MCF 10A (cell line): ENCODE measurements at regions of chr11 and their contacts with region 1.

Region 1: DNA sequence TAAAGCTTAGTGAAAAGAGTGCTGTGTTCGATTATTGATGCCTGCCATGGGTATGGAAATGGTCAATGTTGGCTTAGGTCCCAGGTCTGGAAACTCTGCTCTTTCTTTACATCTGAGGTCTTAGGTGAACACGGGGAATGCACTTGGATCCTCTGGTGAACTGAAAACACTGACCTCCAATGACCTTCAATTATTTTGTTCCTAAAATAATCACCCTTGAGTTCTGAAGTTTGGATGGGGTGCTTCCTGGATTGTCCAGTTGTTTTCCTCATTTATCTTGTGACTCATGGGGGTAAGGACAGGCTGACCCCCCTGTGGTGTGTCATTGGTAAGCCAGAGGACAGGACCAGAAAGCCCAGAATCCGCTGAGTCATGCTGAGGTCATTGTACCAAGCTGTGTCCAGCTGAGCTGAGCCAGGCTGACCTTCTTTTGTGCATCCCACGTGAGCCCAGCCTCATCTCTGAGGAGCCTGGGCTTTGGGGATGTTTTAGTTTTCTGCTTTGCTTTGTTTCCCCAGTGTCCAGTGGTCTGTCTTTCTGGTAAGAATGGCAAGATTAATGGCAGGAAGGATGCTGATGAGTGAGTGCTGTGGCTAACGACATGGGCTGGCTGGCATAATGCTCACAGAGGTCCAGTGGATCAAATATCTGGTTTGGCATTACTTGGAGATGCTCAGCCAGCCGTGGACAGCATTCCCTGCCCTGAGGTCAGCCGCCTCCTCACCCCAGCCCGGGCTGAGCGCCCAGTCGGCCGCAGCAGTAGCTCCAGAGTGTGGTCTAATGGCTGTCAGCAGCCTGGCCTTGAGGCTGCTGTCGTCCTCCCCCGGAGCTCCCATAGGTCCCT is 35.6 kb downstream of the AMPD3 start:
- DNase-seq: peak; percentile 87
- H3K4me3 Mint-ChIP-seq: no peak overlapping the region
- H3K27ac Mint-ChIP-seq: peak overlapping the region; percentile 96
- H3K4me1 Mint-ChIP-seq: peaks cover 23% of the 10 kb centered on the region
- H3K27me3 Mint-ChIP-seq: no peaks in the 10 kb centered on the region
- CTCF ChIP-seq: no peak

Region 2: DNA sequence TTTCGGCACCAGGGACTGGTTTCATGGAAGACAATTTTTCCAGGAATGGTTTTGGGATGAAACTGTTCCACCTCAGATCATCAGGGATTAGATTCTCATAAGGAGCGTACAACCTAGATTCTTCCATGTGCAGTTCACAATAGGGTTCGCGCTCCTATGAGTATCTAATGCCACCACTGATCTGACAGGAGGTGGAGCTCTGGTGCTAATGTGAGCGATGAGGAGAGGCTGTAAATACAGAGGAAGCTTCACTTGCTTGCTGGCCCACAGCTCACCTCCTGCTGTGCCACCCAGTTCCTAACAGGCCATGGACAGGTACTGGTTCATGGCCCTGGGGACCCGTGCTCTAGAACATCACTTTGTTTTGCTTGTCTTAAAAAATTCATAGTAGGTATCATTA is 77.4 kb before region 1 on chr11:
- CTCF ChIA-PET with region 1: interaction called, 7 read pairs
- POLR2A ChIA-PET with region 1: interaction called, 25 read pairs
- intact Hi-C with region 1: no loop called
- DNase-seq: peak; percentile 44
- H3K4me3 Mint-ChIP-seq: no peak overlapping the region
- H3K27ac Mint-ChIP-seq: no peak overlapping the region
- H3K4me1 Mint-ChIP-seq: peaks cover 5% of the 10 kb centered on the region
- H3K27me3 Mint-ChIP-seq: no peaks in the 10 kb centered on the region
- CTCF ChIP-seq: no peak

Region 3: DNA sequence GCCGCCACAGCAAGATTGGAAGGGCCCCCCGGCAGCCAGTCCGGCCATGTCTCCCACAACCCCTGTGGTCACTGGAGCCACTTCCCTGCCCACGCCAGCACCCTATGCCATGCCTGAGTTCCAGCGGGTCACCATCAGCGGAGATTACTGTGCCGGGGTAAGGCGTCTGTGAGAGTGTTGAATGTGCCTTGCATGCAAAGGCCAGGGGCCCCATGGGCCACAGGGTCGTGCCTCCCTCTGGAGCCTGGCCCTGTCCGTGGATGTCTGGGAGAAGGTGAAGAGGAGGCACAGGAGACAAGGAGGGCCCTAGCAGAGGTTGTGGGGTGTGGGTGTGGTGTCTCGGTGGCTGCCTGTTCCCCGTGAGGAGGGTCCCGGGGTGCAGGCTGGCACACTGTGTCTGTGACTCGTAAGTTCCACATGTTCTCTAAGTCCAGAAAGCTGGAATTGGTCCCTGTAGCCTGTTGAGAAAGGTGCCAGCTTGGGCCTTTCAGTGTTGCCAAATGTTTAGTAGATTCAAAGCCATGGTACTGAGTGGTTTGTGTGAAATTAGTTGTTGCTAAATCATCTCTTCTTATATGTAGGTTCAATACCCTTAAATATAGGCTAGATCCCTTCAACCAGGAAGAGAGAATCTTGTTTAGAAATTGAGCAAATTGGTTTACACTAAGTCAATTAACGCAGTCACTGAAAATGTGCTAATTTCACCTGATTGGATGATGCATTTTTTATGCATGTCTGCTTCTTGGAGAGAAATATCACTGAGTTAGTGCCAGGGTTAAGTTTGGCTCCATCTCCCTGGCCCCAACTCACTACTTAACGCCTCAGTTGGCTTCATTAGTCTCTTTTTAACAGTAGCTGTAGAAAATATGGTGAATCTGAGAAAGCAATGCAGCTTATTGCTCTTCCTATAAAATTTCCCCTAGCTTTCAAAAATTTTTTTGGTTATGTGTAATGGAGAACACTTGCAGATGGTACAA is 11.8 kb before region 1 on chr11:
- CTCF ChIA-PET with region 1: no interaction called
- POLR2A ChIA-PET with region 1: interaction called, 11 read pairs
- intact Hi-C with region 1: no loop called
- DNase-seq: no peak
- H3K4me3 Mint-ChIP-seq: no peak overlapping the region
- H3K27ac Mint-ChIP-seq: no peak overlapping the region
- H3K4me1 Mint-ChIP-seq: no peaks in the 10 kb centered on the region
- H3K27me3 Mint-ChIP-seq: no peaks in the 10 kb centered on the region
- CTCF ChIP-seq: no peak

Region 4: GRCh38 chr11:10514210-10514609 is 23.6 kb after region 1 on chr11:
- CTCF ChIA-PET with region 1: interaction called, 3 read pairs
- POLR2A ChIA-PET with region 1: interaction called, 45 read pairs
- intact Hi-C with region 1: no loop called
- DNase-seq: peak; percentile 14
- H3K4me3 Mint-ChIP-seq: no peak overlapping the region
- H3K27ac Mint-ChIP-seq: no peak overlapping the region
- H3K4me1 Mint-ChIP-seq: no peaks in the 10 kb centered on the region
- H3K27me3 Mint-ChIP-seq: no peaks in the 10 kb centered on the region
- CTCF ChIP-seq: peak; percentile 35